Transverse colon (tissue), 4 donors: ENCODE measurements at regions of chr1 and their contacts with region 1.

Region 1: DNA sequence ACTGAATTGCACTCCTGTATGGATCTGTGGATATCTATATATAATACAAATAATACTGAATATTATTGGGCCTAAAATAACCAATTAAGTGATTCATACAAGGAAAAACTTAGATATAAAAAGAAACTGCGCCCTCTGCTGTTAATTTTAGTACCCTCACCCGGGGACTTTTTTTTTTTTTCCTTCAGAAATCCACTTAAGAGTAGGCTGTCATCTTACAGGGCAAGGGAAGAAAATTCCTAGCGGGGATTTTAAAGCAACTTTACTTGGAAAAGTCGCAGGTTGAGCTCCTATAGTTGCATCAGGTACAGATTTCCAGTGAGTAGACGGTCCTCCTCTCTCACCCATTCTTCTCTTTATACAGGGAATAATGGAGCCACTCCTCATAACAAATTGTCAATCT is 1.3 kb downstream of the NTNG1 start:
- DNase-seq: no peak
- H3K4me3 ChIP-seq: peak overlapping the region in 3 of 4 donors; percentile 44 to 61 (median 48)
- H3K27ac ChIP-seq: peak overlapping the region in 1 of 4 donors; percentile 6
- H3K4me1 ChIP-seq: peaks cover 0 to 26% (median 14%) of the 10 kb centered on the region in 4 donors
- H3K27me3 ChIP-seq: peaks cover 75% of the 10 kb centered on the region
- CTCF ChIP-seq: peak; percentile 41 to 74 (median 61)
- EP300 ChIP-seq: no peak
- POLR2A ChIP-seq: no peak

Region 2: GRCh38 chr1:107056426-107057196 is 85.5 kb before region 1 on chr1 and contains the start of gene PRMT6:
- in situ Hi-C with region 1: no loop called
- intact Hi-C with region 1: loop called (anchors 5 kb)
- DNase-seq: peak; percentile 87
- H3K4me3 ChIP-seq: peak within 1 kb of the TSS; percentile 68 to 90 (median 82)
- H3K27ac ChIP-seq: peak within 1 kb of the TSS; percentile 84 to 90 (median 88)
- H3K4me1 ChIP-seq: peaks cover 7 to 24% (median 10%) of the 10 kb centered on the region in 4 donors
- H3K27me3 ChIP-seq: no peaks in the 10 kb centered on the region
- CTCF ChIP-seq: no peak
- EP300 ChIP-seq: no peak
- POLR2A ChIP-seq: peak; percentile 70
- total RNA-seq, gene PRMT6: 10.7 to 15.7 (median 12.0) TPM